AG04450 (cell line): ENCODE measurements at regions of chr15 and their contacts with region 1.

Region 1: GRCh38 chr15:58070801-58071418 is 5.4 kb upstream of the ALDH1A2 start:
- DNase-seq: no peak
- H3K4me3 ChIP-seq: no peak overlapping the region
- H3K27ac ChIP-seq: no peak overlapping the region
- H3K27me3 ChIP-seq: peaks cover 16% of the 10 kb centered on the region
- CTCF ChIP-seq: peak; percentile 86

Region 2: GRCh38 chr15:57751177-57751800 is 319.6 kb before region 1 on chr15:
- CTCF ChIA-PET with region 1: interaction called, 26 read pairs
- POLR2A ChIA-PET with region 1: no interaction called
- DNase-seq: peak; percentile 13
- H3K4me3 ChIP-seq: no peak overlapping the region
- H3K27ac ChIP-seq: no peak overlapping the region
- H3K27me3 ChIP-seq: peaks cover 11% of the 10 kb centered on the region
- CTCF ChIP-seq: peak; percentile 65

Region 3: GRCh38 chr15:57872281-57873030 is 198.5 kb before region 1 on chr15:
- CTCF ChIA-PET with region 1: interaction called, 13 read pairs
- POLR2A ChIA-PET with region 1: no interaction called
- DNase-seq: no peak
- H3K4me3 ChIP-seq: no peak overlapping the region
- H3K27ac ChIP-seq: no peak overlapping the region
- H3K27me3 ChIP-seq: no peaks in the 10 kb centered on the region
- CTCF ChIP-seq: no peak

Region 4: GRCh38 chr15:58056015-58056414 is 14.9 kb before region 1 on chr15:
- CTCF ChIA-PET with region 1: interaction called, 22 read pairs
- POLR2A ChIA-PET with region 1: no interaction called
- DNase-seq: no peak
- H3K4me3 ChIP-seq: no peak overlapping the region
- H3K27ac ChIP-seq: no peak overlapping the region
- H3K27me3 ChIP-seq: no peaks in the 10 kb centered on the region
- CTCF ChIP-seq: 0 out of 2 replicates have a peak, but pooled peaks have one; percentile 20